ENCODE measurements at regions of chr1 and their contacts with region 1.

Region 1: GRCh38 chr1:151047925-151048645 is 534 bp downstream of the C1orf56 start:
- DNase-seq: peak; percentile 79
- ATAC-seq: peak; percentile 85
- H3K4me3 Mint-ChIP-seq: peak overlapping the region; percentile 91
- H3K27ac Mint-ChIP-seq: peak overlapping the region; percentile 87
- H3K4me1 Mint-ChIP-seq: peaks cover 36% of the 10 kb centered on the region
- H3K27me3 Mint-ChIP-seq: no peaks in the 10 kb centered on the region

Region 2: GRCh38 chr1:151006327-151007052 is 41.6 kb before region 1 on chr1 and contains the start of gene MINDY1:
- CTCF ChIA-PET with region 1: interaction called, 10 read pairs
- DNase-seq: peak; percentile 59
- ATAC-seq: peak; percentile 14
- H3K4me3 Mint-ChIP-seq: peak within 1 kb of the TSS; percentile 99
- H3K27ac Mint-ChIP-seq: peak within 1 kb of the TSS; percentile 94
- H3K4me1 Mint-ChIP-seq: peaks cover 69% of the 10 kb centered on the region
- H3K27me3 Mint-ChIP-seq: no peaks in the 10 kb centered on the region
- total RNA-seq, gene MINDY1: 4.2 to 7.0 TPM

Region 3: GRCh38 chr1:151059078-151059907 is 11.2 kb after region 1 on chr1 and contains the start of gene CDC42SE1:
- CTCF ChIA-PET with region 1: interaction called, 71 read pairs
- DNase-seq: peak; percentile 92
- ATAC-seq: peak; percentile 80
- H3K4me3 Mint-ChIP-seq: peak within 1 kb of the TSS; percentile 91
- H3K27ac Mint-ChIP-seq: peak within 1 kb of the TSS; percentile 96
- H3K4me1 Mint-ChIP-seq: peaks cover 53% of the 10 kb centered on the region
- H3K27me3 Mint-ChIP-seq: no peaks in the 10 kb centered on the region
- total RNA-seq, gene CDC42SE1: 214 to 235 TPM

Region 4: GRCh38 chr1:151070474-151071276 is 22.6 kb after region 1 on chr1 and contains the start of gene GABPB2:
- CTCF ChIA-PET with region 1: interaction called, 10 read pairs
- DNase-seq: peak; percentile 91
- ATAC-seq: peak; percentile 85
- H3K4me3 Mint-ChIP-seq: peak within 1 kb of the TSS; percentile 90
- H3K27ac Mint-ChIP-seq: peak within 1 kb of the TSS; percentile 98
- H3K4me1 Mint-ChIP-seq: peaks cover 26% of the 10 kb centered on the region
- H3K27me3 Mint-ChIP-seq: no peaks in the 10 kb centered on the region
- total RNA-seq, gene GABPB2: 20.0 to 23.9 TPM

Measured in activated CD8-positive, alpha-beta memory T cell treated with anti-CD3 and anti-CD28 coated beads, Interleukin-2, amount 10 ng/mL, durations not matched to agents 7 days and 5 days (primary cell).